Activated CD4-positive, alpha-beta memory T cell treated with anti-CD3 and anti-CD28 coated beads for 36 hours (primary cell): ENCODE measurements at regions of chr12 and their contacts with region 1.

Region 1: GRCh38 chr12:54324617-54325441 is at the start of gene COPZ1:
- DNase-seq: peak; percentile 97
- H3K4me3 Mint-ChIP-seq: peak within 1 kb of the TSS; percentile 95
- H3K27ac Mint-ChIP-seq: peak within 1 kb of the TSS; percentile 84
- H3K4me1 Mint-ChIP-seq: peaks cover 33% of the 10 kb centered on the region
- H3K27me3 Mint-ChIP-seq: no peaks in the 10 kb centered on the region
- total RNA-seq, gene COPZ1: 99.0 to 110 TPM

Region 2: DNA sequence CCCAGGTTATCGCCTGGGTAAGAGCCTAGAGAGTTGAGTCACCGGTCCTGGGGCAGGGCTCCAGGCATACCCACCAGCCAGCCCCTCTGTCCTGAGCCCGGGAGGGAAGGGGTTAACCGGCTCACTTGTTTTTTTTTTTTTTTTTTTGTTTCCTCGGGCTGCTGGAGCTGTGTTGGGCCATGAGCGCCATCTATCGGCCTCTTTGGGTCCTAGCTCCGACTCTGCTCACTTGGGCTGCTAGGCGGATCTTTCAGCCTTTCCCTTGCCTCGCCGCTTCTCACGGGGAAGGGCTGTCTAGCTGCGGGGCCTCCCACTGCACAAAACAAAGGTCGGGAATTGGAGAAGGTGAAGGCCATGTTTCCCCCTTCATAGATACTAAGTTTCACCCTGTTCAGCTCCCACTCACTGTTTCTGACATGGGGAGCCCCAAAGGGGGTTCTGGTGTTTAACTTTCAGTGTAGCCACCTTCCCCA is 133.2 kb before region 1 on chr12:
- CTCF ChIA-PET with region 1: no interaction called
- POLR2A ChIA-PET with region 1: no interaction called
- intact Hi-C with region 1: no loop called
- DNase-seq: peak; percentile 83
- H3K4me3 Mint-ChIP-seq: no peak overlapping the region
- H3K27ac Mint-ChIP-seq: no peak overlapping the region
- H3K4me1 Mint-ChIP-seq: peaks cover 17% of the 10 kb centered on the region
- H3K27me3 Mint-ChIP-seq: peaks cover 24% of the 10 kb centered on the region

Region 3: GRCh38 chr12:54220092-54220557 is 104.7 kb before region 1 on chr12:
- CTCF ChIA-PET with region 1: interaction called, 8 read pairs
- POLR2A ChIA-PET with region 1: no interaction called
- intact Hi-C with region 1: loop called (anchors 1 kb)
- DNase-seq: peak; percentile 84
- H3K4me3 Mint-ChIP-seq: no peak overlapping the region
- H3K27ac Mint-ChIP-seq: no peak overlapping the region
- H3K4me1 Mint-ChIP-seq: peaks cover 18% of the 10 kb centered on the region
- H3K27me3 Mint-ChIP-seq: no peaks in the 10 kb centered on the region

Region 4: GRCh38 chr12:54294152-54294952 is 30.5 kb before region 1 on chr12:
- CTCF ChIA-PET with region 1: interaction called, 45 read pairs
- POLR2A ChIA-PET with region 1: interaction called, 6 read pairs
- intact Hi-C with region 1: loop called (anchors 1 kb)
- DNase-seq: peak; percentile 79
- H3K4me3 Mint-ChIP-seq: no peak overlapping the region
- H3K27ac Mint-ChIP-seq: no peak overlapping the region
- H3K4me1 Mint-ChIP-seq: peaks cover 3% of the 10 kb centered on the region
- H3K27me3 Mint-ChIP-seq: peaks cover 2% of the 10 kb centered on the region

Region 5: GRCh38 chr12:54306925-54307741 is 17.7 kb before region 1 on chr12:
- CTCF ChIA-PET with region 1: interaction called, 11 read pairs
- POLR2A ChIA-PET with region 1: no interaction called
- intact Hi-C with region 1: no loop called
- DNase-seq: peak; percentile 69
- H3K4me3 Mint-ChIP-seq: no peak overlapping the region
- H3K27ac Mint-ChIP-seq: no peak overlapping the region
- H3K4me1 Mint-ChIP-seq: peaks cover 12% of the 10 kb centered on the region
- H3K27me3 Mint-ChIP-seq: peaks cover 26% of the 10 kb centered on the region

Region 6: DNA sequence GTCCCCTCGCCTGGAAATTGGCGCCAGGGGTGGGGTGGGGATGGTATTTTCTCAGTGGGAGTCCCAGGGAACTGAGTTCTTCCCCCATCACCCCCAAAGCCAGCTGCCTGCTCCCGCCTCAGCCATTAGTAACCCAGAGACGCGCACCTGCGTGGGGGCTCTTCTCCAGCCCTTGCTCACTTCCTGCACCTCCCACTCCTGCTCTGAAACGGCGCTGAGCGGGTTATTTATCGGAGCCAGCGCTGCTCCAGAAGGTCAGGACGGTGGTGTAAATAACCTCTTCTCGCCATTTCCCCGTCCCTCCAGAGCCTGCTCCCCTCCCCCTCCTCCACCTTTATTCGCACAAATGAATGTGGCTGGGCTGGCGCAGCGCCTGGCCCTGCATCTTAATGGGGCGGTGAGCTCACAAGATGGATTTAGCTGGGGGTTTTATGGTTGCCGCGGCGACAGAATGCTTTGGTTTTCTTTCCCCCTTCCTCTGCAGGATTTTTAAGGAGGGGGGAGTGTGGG is 27.2 kb after region 1 on chr12:
- CTCF ChIA-PET with region 1: interaction called, 12 read pairs
- POLR2A ChIA-PET with region 1: no interaction called
- intact Hi-C with region 1: no loop called
- DNase-seq: peak; percentile 68
- H3K4me3 Mint-ChIP-seq: peak overlapping the region; percentile 59
- H3K27ac Mint-ChIP-seq: peak overlapping the region; percentile 46
- H3K4me1 Mint-ChIP-seq: peaks cover 15% of the 10 kb centered on the region
- H3K27me3 Mint-ChIP-seq: no peaks in the 10 kb centered on the region